Left cardiac atrium (tissue), 4 donors: ENCODE measurements at regions of chr12 and their contacts with region 1.

Region 1: DNA sequence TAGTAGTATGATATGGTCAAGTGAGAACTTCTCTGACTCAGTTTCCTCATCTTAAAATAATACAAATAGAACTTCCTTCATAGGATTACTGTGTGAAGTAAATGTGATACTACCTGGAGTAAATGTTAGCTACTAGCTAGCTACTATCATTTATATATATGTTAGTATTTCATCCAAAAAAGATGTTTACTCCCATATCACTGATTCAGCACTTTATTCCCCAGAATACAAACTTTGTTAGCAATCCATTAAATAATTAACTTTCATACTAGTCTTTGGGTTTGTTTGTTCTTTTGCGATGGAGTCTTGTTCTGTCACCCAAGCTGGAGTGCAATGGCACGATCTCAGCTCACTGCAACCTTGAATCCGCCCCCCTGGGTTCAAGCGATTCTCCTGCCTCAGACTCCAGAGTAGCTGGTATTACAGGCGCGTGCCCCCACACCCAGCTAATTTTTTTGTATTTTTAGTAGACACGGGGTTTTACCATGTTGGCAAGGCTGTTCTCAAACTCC is 8.4 kb downstream of the SBNO1 start:
- DNase-seq: no peak
- ATAC-seq: no peak

Region 2: GRCh38 chr12:123388177-123388947 is 32.1 kb after region 1 on chr12:
- intact Hi-C with region 1: loop called in 1 of 2 experiments (anchors 5 kb)
- DNase-seq: peak; percentile 83
- ATAC-seq: peak; percentile 72 to 76